ENCODE measurements at regions of chr17 and their contacts with region 1.

Region 1: GRCh38 chr17:48816774-48817590 is at the start of gene TTLL6:
- DNase-seq: peak; percentile 74
- CTCF ChIP-seq: no peak

Region 2: DNA sequence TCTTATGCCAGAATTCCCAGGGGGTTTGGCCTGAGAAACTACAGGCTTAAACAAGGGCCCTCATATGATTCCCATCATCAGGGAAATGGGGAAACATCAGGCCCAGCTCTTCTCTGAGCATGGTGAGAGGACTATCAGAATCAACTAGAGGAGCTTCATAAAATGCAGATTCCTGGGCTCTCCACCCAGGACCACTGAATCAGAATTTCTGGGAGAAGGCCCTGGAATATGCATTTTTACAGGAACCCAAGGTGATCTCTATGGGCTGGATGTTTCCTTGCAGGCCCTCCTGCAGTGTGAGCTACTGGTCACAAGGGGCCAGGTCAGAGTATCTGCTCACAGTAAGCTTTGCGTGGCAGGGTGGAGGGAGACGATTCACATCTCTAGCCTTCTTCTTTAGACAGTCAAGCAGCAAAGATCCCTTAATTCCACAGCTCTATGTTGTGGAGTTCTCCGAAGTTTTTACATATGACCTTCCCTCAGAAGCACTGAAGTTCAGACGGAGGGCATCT is 49.7 kb before region 1 on chr17:
- CTCF ChIA-PET with region 1: no interaction called
- POLR2A ChIA-PET with region 1: no interaction called
- DNase-seq: no peak
- CTCF ChIP-seq: no peak

Region 3: DNA sequence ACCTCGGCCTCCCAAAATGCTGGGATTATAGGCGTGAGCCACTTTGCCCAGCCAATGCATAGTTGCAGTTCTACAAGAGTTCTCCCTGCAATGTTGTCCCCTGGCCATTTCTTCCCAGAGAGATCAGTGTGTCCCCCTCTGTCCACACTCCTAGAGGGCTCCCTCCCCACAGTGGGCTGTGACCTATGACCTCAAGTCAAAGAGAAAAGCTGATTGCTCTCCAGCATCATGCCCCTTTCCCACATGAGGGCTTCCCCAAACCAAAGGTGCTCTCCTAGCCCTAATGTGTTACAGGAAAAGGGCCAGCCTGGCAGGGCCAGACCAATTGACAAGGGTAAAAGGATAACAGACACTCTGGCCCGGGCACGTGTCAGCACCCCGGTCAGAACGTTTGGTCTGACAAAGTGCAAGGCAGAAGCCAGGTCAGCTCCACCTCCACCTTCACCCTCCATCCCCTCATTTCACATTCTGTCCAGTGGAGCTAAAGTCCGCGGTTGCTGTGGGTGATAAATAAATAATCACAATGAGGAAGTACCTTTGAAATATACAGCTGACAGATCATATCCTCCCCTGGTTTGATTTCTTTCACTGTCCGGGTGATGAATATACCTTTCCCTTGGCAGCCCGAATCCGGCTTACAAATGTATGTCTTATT is 17.8 kb before region 1 on chr17:
- CTCF ChIA-PET with region 1: interaction called, 66 read pairs
- POLR2A ChIA-PET with region 1: interaction called, 3 read pairs
- DNase-seq: no peak
- CTCF ChIP-seq: no peak

Region 4: GRCh38 chr17:48804925-48805411 is 12.0 kb before region 1 on chr17:
- CTCF ChIA-PET with region 1: interaction called, 66 read pairs
- POLR2A ChIA-PET with region 1: interaction called, 3 read pairs
- DNase-seq: peak; percentile 83
- CTCF ChIP-seq: peak; percentile 92

Region 5: DNA sequence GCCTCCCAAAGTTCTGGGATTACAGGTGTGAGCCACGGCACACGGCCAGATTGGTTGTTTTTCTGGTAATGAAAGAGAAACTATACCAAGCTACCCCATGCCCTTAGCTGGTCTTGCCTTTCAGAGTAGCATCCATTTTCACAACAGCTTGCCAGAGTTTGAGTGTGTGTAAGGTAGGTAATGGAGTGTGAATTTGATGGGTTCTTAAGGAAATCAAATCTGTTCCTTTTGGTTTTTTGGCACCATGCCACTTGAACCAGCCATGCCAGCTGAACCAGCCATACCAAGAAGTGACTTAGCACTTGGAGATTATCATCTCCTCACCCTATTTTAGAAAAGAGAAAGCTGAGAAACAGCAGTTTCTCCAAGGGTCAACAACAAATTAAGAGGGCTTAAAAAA is 19.0 kb after region 1 on chr17:
- CTCF ChIA-PET with region 1: interaction called, 12 read pairs
- POLR2A ChIA-PET with region 1: no interaction called
- DNase-seq: no peak
- CTCF ChIP-seq: no peak

Region 6: GRCh38 chr17:48850792-48851323 is 33.9 kb after region 1 on chr17:
- CTCF ChIA-PET with region 1: interaction called, 25 read pairs
- POLR2A ChIA-PET with region 1: no interaction called
- DNase-seq: no peak
- CTCF ChIP-seq: no peak

Region 7: DNA sequence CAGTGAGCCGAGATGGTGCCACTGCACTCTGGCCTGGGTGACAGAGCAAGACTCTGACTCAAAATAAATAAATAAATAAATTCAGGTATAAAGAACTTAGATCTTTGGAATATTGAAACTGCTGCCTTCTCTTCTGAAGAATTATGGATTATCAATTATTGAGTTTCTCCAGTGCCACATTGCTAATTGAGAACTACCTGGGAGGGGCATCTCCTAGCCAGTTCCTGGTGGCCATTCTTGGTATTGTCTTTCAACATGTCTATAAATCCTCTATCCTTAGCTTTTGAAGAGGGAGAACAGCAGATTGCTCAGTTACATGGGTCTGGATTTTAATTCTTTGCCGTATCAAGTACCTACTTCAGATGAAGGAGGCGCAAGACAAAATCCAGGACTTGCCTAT is 43.1 kb after region 1 on chr17:
- CTCF ChIA-PET with region 1: interaction called, 32 read pairs
- POLR2A ChIA-PET with region 1: no interaction called
- DNase-seq: no peak
- CTCF ChIP-seq: no peak

Measured in GM10248 (cell line).